Heart right ventricle (tissue), 16 donors: ENCODE measurements at regions of chr17 and their contacts with region 1.

Region 1: DNA sequence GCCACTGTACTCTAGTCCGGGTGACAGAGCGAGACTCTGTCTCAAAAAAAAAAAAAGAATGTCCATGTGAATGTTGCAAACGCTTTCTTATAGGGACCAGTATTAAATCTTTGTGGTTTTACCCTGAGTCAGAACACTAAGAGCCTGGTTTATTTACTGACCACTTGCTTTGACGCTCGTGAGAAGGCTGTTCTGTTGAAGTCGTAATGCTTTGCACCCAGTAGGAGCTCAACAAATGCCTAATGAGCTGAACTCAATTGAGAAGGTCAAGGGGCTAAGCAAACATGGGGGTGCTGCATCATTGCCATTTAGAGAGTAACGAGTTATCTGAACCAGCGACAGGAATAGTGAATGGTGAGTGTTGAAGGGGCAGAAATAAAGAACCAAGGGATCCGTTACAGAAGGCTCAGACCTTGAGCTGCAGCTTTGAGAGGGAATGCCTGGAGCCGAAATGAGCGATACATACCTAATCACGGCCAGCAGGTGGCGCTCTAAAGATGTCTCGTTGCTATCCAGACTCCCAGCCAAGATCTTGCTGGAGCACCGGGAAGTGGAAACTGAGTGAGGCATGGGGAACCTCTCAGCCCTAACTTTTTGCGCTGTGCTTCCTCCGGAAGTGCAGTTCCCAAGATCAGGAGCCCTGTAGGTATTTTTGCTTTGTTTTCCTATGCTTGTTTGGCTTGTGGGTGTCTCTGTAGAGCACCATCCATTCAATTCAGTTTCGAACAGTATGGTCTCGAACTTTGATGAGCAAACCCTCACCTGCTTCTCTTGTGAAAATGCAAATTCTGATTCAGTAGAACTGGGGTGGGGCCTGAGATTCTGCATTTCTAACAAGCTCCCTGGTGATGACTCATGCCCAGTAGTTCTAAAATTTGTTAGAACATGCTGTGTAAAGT is 12.6 kb upstream of the RNF222 start:
- DNase-seq: peak; percentile 87 to 90
- ATAC-seq: peak; percentile 87 to 96 (median 94)
- H3K4me3 ChIP-seq: no peak overlapping the region
- H3K27ac ChIP-seq: no peak overlapping the region
- H3K4me1 ChIP-seq: peaks cover 0 to 23% (median 4%) of the 10 kb centered on the region in 9 donors
- H3K27me3 ChIP-seq: peaks cover 0 to 6% (median 0%) of the 10 kb centered on the region in 7 donors
- CTCF ChIP-seq: peak; percentile 74 to 92 (median 87)

Region 2: DNA sequence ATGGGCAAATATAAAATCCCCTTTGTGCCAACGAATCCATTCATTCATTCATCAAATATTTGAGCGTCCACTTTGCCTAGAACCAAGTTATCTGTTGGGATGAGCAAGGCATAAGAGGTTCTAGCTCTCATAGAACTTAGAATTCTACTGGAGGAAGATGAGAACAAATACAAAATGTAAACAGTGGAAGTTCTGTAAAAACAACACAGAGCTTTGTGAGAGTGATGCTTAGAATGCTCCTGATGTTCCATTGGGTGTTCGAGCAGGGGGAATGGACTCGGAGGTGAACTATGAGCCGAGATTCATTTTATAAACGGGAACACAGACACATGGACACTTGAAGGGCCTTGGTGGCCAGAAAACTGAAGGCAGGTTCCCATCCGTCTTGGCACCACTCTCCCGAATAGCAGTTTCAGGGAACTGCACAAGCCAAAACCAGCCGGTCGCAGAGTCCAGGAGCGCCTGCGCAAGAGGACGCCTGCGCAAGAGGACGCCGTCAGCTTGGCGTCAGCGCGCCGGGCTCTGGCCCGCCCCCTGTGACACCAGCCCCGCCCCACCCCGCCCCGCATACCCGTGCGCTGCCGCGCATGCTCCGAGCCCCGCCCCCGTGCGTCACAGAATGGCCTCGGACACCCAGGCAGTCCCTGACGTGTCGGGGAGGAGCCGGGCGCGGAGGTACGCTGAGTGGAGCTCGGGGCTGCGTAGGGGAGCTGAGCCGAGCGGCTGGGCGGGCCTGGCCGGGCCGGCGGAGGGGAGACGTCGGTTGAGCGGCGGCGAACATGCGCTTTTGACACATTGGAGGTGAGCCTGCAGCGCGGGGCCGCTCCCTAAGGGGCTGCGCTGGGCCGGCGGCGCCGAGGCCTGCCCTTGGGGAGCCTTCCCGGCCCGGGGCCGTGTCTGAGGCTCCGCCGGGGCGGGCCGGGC is 25.3 kb after region 1 on chr17 and contains the start of gene NDEL1:
- intact Hi-C with region 1: no loop called
- DNase-seq: peak; percentile 99 to 100
- ATAC-seq: peak; percentile 97 to 99 (median 98)
- H3K4me3 ChIP-seq: peak within 1 kb of the TSS; percentile 77 to 98 (median 86)
- H3K27ac ChIP-seq: peak within 1 kb of the TSS; percentile 94 to 100 (median 100)
- H3K4me1 ChIP-seq: peaks cover 0 to 50% (median 30%) of the 10 kb centered on the region in 9 donors
- H3K27me3 ChIP-seq: no peaks in the 10 kb centered on the region
- CTCF ChIP-seq: no peak
- total RNA-seq, gene NDEL1: 21.2 to 37.0 (median 28.4) TPM

Region 3: GRCh38 chr17:8479431-8479947 is 69.3 kb after region 1 on chr17:
- intact Hi-C with region 1: loop called in 3 of 10 experiments (anchors 5 to 10 kb)
- DNase-seq: peak; percentile 33 to 44
- ATAC-seq: peak; percentile 31 to 75 (median 68)
- H3K4me3 ChIP-seq: no peak overlapping the region
- H3K27ac ChIP-seq: peak overlapping the region in 6 of 10 donors; percentile 20 to 56 (median 42)
- H3K4me1 ChIP-seq: peaks cover 0 to 17% (median 9%) of the 10 kb centered on the region in 9 donors
- H3K27me3 ChIP-seq: no peaks in the 10 kb centered on the region
- CTCF ChIP-seq: no peak

Region 4: DNA sequence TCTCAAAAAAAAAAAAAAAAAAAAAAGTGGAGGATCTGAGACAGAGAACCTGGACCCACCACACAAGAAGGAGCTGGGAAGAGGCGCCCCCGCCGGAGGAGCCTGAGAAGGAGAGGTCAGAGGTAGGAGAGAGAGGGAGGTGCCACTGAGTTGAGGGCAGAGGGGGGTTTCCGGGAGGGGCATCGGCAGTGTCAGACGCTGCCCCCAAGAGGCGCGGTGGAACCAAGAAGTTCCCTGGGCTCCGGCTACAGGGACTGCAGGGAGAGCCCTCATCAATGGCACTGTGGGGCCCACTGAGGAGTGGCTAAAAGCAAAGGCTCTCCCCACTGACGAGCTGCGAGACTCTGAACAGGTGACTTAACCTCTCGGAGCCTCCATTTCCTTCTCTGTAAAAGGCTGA is 330.3 kb after region 1 on chr17:
- intact Hi-C with region 1: loop called in 5 of 10 experiments (anchors 5 kb)
- DNase-seq: no peak
- ATAC-seq: no peak
- H3K4me3 ChIP-seq: peak overlapping the region in 1 of 10 donors; percentile 23
- H3K27ac ChIP-seq: no peak overlapping the region
- H3K4me1 ChIP-seq: peaks cover 0 to 6% (median 0%) of the 10 kb centered on the region in 9 donors
- H3K27me3 ChIP-seq: peaks cover 0 to 4% (median 0%) of the 10 kb centered on the region in 7 donors
- CTCF ChIP-seq: no peak

Region 5: DNA sequence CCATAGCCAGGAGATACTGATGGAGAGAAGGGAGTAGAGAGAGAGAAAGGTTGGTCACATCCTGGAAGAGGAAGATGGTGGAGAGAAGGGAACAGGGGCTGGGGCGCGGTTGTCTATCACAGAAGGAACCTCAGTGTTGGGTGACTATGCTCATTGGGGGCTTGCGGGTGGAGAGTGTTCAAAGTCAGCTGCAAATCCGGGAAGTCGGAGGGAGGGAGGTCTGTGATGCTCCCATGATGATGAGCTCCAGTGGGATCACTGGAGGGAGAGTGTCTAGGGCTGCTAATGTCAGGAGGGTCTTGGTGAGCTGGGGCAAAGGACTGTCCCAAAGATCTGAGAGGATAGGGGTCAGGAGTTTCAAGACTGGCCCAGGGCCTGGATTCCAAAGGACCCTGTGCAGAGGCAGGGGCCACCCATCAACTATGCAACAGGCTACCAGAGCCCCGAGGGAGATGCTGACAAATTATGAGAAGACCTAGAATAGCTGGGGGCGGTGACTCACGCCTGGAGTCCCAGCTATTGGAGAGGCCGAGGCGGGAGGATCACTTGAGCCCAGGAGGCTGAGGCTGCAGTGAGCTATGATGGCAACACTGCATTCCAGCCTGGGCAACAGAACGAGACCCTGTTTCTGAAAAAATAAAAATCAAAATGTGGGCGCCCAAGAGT is 345.5 kb after region 1 on chr17:
- intact Hi-C with region 1: no loop called
- DNase-seq: no peak
- ATAC-seq: no peak
- H3K4me3 ChIP-seq: no peak overlapping the region
- H3K27ac ChIP-seq: no peak overlapping the region
- H3K4me1 ChIP-seq: peaks cover 0 to 5% (median 0%) of the 10 kb centered on the region in 9 donors
- H3K27me3 ChIP-seq: peaks cover 0 to 18% (median 0%) of the 10 kb centered on the region in 7 donors
- CTCF ChIP-seq: no peak

Region 6: DNA sequence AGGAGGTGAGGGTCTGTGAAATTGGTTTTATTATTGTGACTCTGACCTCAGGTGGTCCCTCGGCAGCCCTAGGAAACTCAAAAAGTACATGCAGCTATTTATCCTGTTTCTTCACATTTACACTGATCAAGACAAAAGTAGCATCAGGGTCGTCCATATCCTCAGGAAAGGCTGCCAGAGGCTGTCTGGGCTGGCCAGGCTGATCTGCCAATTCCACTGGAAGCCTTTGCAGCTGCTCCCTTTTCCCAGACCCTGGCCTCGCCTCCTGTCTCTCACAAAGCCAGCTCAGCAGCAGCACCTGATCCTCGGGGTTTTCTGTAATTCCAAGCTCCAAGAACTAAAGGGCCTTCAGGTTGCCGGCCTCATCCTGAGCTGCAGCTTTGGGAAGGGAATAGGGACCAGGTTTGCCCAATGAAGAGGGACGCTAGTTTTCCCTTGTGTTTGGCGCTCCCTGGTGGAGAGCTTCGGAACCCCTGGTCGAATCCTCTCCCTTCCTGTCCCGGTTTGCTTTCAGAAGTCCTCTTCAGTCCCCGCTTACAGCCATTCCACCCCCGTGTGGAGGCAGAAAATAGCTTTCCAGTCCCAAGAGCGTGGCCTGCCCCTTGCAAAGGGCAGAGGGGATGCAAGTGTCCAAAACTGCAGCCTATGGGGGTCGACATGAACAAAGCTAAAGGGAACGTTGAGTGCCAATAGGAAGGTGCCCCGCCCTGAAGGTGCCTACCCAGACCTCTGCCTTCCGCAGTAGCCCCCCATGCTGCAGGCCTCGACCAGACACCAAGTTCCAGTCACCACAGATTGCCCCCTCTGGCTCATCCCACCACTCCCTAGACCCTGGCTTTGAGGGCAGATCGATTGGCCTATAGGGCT is 375.6 kb after region 1 on chr17:
- intact Hi-C with region 1: loop called in 8 of 10 experiments (anchors 1 to 10 kb)
- DNase-seq: peak; percentile 80 to 83
- ATAC-seq: peak; percentile 80 to 93 (median 89)
- H3K4me3 ChIP-seq: no peak overlapping the region
- H3K27ac ChIP-seq: no peak overlapping the region
- H3K4me1 ChIP-seq: peaks cover 0 to 20% (median 0%) of the 10 kb centered on the region in 9 donors
- H3K27me3 ChIP-seq: no peaks in the 10 kb centered on the region
- CTCF ChIP-seq: peak; percentile 48 to 94 (median 88)